PC-3 (cell line): ENCODE measurements at regions of chr1 and their contacts with region 1.

Region 1: GRCh38 chr1:54950369-54951163 is 29.9 kb upstream of the TMEM61 start:
- DNase-seq: peak; percentile 93
- ATAC-seq: peak; percentile 54
- H3K4me3 ChIP-seq: no peak overlapping the region
- H3K27ac ChIP-seq: peak overlapping the region; percentile 78
- H3K4me1 ChIP-seq: peaks cover 57% of the 10 kb centered on the region
- H3K27me3 ChIP-seq: no peaks in the 10 kb centered on the region
- CTCF ChIP-seq: peak; percentile 83

Region 2: DNA sequence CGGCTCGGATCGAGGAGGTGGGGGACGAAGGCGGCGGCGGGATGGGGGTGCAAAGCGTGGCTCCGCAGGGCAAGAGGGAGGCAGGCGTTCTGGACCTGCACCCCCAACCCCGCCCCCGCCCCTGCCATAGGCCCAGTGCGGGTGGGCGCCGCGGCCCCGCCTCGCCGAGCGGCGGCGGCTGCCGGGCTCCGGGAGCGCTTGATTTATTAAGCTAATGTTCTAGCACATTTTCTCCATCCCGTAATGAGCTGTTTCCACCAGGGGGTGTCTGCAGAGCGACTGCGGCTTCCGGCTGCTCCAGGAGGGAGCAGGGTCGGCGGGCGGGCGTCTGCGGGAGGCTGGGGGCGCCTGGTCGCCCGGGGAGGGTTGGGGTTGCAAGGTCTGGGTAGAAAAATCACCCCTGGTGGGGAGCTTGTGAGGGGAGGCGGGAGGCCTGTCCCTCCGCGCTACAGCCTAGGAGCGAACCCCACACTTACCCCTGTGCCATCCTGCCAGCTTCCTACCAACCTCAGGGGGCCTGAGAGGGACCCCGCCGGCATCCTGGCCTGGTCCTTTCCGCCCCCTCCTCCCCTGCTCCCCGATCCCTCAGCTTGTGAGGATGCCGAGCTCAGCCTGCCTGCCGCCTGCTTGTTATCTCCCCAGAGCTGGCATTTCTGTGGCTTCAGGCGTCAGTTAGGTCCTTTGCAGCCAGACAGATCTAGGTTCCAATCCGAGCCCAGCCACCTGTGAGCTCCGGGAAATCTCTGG is 451.0 kb before region 1 on chr1:
- CTCF ChIA-PET with region 1: no interaction called
- POLR2A ChIA-PET with region 1: interaction called, 15 read pairs
- intact Hi-C with region 1: no loop called
- DNase-seq: peak; percentile 54
- ATAC-seq: peak; percentile 76
- H3K4me3 ChIP-seq: peak overlapping the region; percentile 64
- H3K27ac ChIP-seq: no peak overlapping the region
- H3K4me1 ChIP-seq: peaks cover 6% of the 10 kb centered on the region; the same call in 1 of the 2 replicates
- H3K27me3 ChIP-seq: 0 out of 2 replicates have a peak, but pooled peaks cover 25% of the 10 kb centered on the region
- CTCF ChIP-seq: peak; percentile 50

Region 3: GRCh38 chr1:54640863-54641836 is 309.4 kb before region 1 on chr1 and contains the start of gene MROH7:
- CTCF ChIA-PET with region 1: no interaction called
- POLR2A ChIA-PET with region 1: no interaction called
- intact Hi-C with region 1: no loop called
- DNase-seq: no peak
- ATAC-seq: no peak
- H3K4me3 ChIP-seq: no peak within 1 kb of the TSS
- H3K27ac ChIP-seq: no peak within 1 kb of the TSS
- H3K4me1 ChIP-seq: no peaks in the 10 kb centered on the region
- H3K27me3 ChIP-seq: peaks cover 3% of the 10 kb centered on the region; the same call in 1 of the 2 replicates
- CTCF ChIP-seq: no peak
- total RNA-seq, gene MROH7: not detected in 2 replicates

Region 4: GRCh38 chr1:54671985-54672608 is 278.5 kb before region 1 on chr1:
- CTCF ChIA-PET with region 1: no interaction called
- POLR2A ChIA-PET with region 1: no interaction called
- intact Hi-C with region 1: loop called (anchors 5 kb)
- DNase-seq: peak; percentile 76
- ATAC-seq: peak; percentile 85
- H3K4me3 ChIP-seq: no peak overlapping the region
- H3K27ac ChIP-seq: no peak overlapping the region
- H3K4me1 ChIP-seq: no peaks in the 10 kb centered on the region
- H3K27me3 ChIP-seq: 0 out of 2 replicates have a peak, but pooled peaks cover under 1% of the 10 kb centered on the region
- CTCF ChIP-seq: peak; percentile 89

Region 5: GRCh38 chr1:54971317-54971791 is 20.8 kb after region 1 on chr1:
- CTCF ChIA-PET with region 1: interaction called, 5 read pairs
- POLR2A ChIA-PET with region 1: no interaction called
- intact Hi-C with region 1: loop called (anchors 1 kb)
- DNase-seq: peak; percentile 92
- ATAC-seq: peak; percentile 92
- H3K4me3 ChIP-seq: peak overlapping the region; percentile 1; the same call in 1 of the 2 replicates
- H3K27ac ChIP-seq: peak overlapping the region; percentile 92
- H3K4me1 ChIP-seq: peaks cover 47% of the 10 kb centered on the region
- H3K27me3 ChIP-seq: no peaks in the 10 kb centered on the region
- CTCF ChIP-seq: no peak

Region 6: GRCh38 chr1:54996359-54996868 is 45.8 kb after region 1 on chr1:
- CTCF ChIA-PET with region 1: interaction called, 18 read pairs
- POLR2A ChIA-PET with region 1: no interaction called
- intact Hi-C with region 1: loop called (anchors 1 kb)
- DNase-seq: peak; percentile 84
- ATAC-seq: peak; percentile 95
- H3K4me3 ChIP-seq: peak overlapping the region; percentile 15; the same call in 1 of the 2 replicates
- H3K27ac ChIP-seq: no peak overlapping the region
- H3K4me1 ChIP-seq: no peaks in the 10 kb centered on the region
- H3K27me3 ChIP-seq: no peaks in the 10 kb centered on the region
- CTCF ChIP-seq: peak; percentile 93

Region 7: GRCh38 chr1:55021965-55022546 is 71.5 kb after region 1 on chr1:
- CTCF ChIA-PET with region 1: interaction called, 51 read pairs
- POLR2A ChIA-PET with region 1: interaction called, 4 read pairs
- intact Hi-C with region 1: loop called (anchors 1 kb)
- DNase-seq: peak; percentile 96
- ATAC-seq: peak; percentile 100
- H3K4me3 ChIP-seq: no peak overlapping the region
- H3K27ac ChIP-seq: no peak overlapping the region
- H3K4me1 ChIP-seq: peaks cover 11% of the 10 kb centered on the region
- H3K27me3 ChIP-seq: no peaks in the 10 kb centered on the region
- CTCF ChIP-seq: peak; percentile 94